Body of pancreas (tissue), 4 donors: ENCODE measurements at regions of chr19 and their contacts with region 1.

Region 1: DNA sequence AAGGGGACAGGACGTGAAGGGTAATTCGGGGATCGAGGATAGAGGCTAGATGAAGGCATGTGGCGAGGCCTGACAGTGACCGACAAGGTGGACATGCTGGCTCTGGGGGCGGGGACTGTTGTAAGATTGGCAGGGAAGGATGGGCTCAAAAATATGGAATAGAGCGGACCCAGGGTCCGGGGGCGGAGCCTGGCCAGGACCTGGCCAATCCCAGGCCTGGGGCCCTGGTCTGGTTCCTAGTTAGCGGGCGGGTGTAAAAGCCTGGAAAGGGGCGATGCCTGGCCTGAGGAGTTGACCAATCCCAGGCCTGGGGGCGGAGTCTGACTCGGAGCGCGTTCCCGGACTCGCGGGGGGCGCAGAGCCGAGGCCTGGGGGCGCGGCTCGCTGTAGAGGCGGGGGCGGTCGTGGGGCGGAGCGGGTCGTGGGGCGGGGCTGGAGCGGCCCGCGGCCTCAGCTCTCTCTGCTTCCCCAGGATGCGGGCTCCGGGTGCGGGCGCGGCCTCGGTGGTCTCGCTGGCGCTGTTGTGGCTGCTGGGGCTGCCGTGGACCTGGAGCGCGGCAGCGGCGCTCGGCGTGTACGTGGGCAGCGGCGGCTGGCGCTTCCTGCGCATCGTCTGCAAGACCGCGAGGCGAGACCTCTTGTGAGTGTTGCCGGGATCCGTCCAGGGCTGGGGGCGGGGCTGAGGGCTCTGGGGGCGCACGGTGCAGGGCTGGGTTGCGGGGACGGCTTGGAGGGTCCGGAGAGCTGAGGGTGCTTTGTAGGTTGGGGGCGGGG is at the start of gene SLC27A1:
- DNase-seq: peak; percentile 97 to 99 (median 98)
- ATAC-seq: peak; percentile 86
- H3K4me3 ChIP-seq: peak within 1 kb of the TSS; percentile 43 to 91
- H3K27ac ChIP-seq: peak within 1 kb of the TSS; percentile 69 to 94 (median 85)
- H3K4me1 ChIP-seq: peaks cover 38% of the 10 kb centered on the region
- H3K27me3 ChIP-seq: no peaks in the 10 kb centered on the region
- CTCF ChIP-seq: no peak
- POLR2A ChIP-seq: peak in 2 of 3 donors; percentile 45 to 67
- total RNA-seq, gene SLC27A1: 21.1 to 25.7 TPM

Region 2: GRCh38 chr19:17346109-17346671 is 124.1 kb before region 1 on chr19:
- intact Hi-C with region 1: loop called (anchors 2 kb)
- DNase-seq: peak; percentile 65 to 80 (median 70)
- ATAC-seq: peak; percentile 81
- H3K4me3 ChIP-seq: no peak overlapping the region
- H3K27ac ChIP-seq: peak overlapping the region in 1 of 4 donors; percentile 21
- H3K4me1 ChIP-seq: no peaks in the 10 kb centered on the region
- H3K27me3 ChIP-seq: no peaks in the 10 kb centered on the region
- CTCF ChIP-seq: peak; percentile 77 to 93 (median 86)
- POLR2A ChIP-seq: no peak